PC-9 (cell line): ENCODE measurements at regions of chr2 and their contacts with region 1.

Region 1: GRCh38 chr2:67159929-67160328 is 237.2 kb upstream of the ETAA1 start:
- DNase-seq: no peak
- H3K4me3 ChIP-seq: no peak overlapping the region
- H3K27ac ChIP-seq: no peak overlapping the region
- H3K4me1 ChIP-seq: no peaks in the 10 kb centered on the region
- H3K27me3 ChIP-seq: no peaks in the 10 kb centered on the region
- CTCF ChIP-seq: no peak

Region 2: DNA sequence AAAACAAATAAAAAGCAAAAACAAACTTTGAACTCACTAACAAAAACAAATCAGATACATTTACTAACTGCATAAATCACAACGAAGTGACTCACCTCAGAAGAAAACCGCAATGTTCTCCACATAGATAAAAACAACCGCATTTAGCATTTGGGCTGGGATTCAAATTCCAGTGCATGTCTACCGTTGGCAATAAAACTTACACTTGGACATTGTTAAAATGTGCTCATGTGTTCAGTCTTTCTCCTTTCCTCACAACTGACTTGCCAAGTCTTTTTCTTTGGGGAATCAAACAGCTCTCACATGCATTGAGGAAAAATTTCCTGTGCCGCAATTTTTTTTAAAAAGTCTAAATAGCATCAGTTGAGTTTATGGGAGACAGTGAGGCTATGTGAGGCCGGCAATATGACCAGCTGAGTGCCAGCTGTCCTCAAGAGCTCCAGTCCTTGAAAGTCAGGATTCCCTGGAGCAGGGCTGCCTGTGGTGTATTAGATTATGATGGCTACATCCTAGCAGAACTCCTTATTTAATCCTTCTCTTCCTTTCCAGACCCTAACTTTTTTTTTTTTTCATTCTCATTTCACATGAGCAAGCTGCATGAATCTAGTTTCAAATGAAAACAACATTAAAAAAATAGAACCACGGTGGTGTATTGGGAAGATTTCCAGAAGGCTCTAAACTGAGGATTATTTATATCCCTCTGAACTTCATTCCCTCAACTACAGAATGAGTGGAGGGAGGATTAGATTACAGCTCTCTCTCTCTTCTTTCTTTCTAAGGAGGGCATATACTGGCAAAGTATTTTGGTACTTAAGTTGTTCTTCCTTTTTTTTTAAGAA is 795.2 kb before region 1 on chr2:
- CTCF ChIA-PET with region 1: no interaction called
- POLR2A ChIA-PET with region 1: no interaction called
- intact Hi-C with region 1: no loop called
- DNase-seq: peak in 1 of 2 experiments; percentile 62
- H3K4me3 ChIP-seq: no peak overlapping the region
- H3K27ac ChIP-seq: no peak overlapping the region
- H3K4me1 ChIP-seq: no peaks in the 10 kb centered on the region
- H3K27me3 ChIP-seq: peaks cover 12% of the 10 kb centered on the region; the same call in 1 of the 2 replicates
- CTCF ChIP-seq: no peak

Region 3: GRCh38 chr2:67186871-67187270 is 26.9 kb after region 1 on chr2:
- CTCF ChIA-PET with region 1: no interaction called
- POLR2A ChIA-PET with region 1: no interaction called
- intact Hi-C with region 1: no loop called
- DNase-seq: no peak
- H3K4me3 ChIP-seq: no peak overlapping the region
- H3K27ac ChIP-seq: no peak overlapping the region
- H3K4me1 ChIP-seq: no peaks in the 10 kb centered on the region
- H3K27me3 ChIP-seq: no peaks in the 10 kb centered on the region
- CTCF ChIP-seq: no peak

Region 4: DNA sequence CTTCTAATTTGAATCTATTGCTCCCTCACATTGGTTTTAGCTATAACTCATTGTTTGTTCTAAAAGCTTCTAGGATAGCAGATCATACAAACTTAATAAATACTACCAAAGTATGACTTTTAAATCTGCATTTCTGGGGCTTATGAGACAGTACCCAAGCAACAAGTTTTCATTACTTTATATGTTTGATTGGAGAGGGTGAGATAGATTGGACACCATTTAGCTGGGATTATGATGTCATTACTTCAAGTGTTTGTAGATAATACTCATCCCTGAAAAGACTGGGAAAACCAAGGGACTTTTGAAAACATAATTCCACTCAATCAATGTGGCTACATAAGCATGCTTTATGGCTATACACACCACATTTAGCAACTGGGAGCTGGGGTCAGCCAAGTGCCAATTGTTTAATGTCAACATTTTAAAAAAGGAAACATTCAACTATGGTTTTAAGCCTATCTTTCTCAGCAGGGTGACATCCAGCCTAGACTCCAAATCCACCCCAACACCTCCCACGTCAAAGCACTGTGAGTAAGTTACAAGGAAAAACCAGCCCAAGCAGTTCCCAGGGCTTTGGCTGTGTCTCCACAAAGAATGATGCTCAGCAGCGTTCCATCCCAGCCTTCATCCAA is 357.1 kb after region 1 on chr2:
- CTCF ChIA-PET with region 1: no interaction called
- POLR2A ChIA-PET with region 1: no interaction called
- intact Hi-C with region 1: loop called (anchors 10 kb)
- DNase-seq: no peak
- H3K4me3 ChIP-seq: no peak overlapping the region
- H3K27ac ChIP-seq: no peak overlapping the region
- H3K4me1 ChIP-seq: no peaks in the 10 kb centered on the region
- H3K27me3 ChIP-seq: no peaks in the 10 kb centered on the region
- CTCF ChIP-seq: no peak